Ascending aorta (tissue), 2 donors: ENCODE measurements at regions of chr11 and their contacts with region 1.

Region 1: GRCh38 chr11:8018484-8019313 is 31.6 kb downstream of the EIF3F start:
- DNase-seq: peak in 1 of 2 donors; percentile 89
- H3K4me3 ChIP-seq: peak overlapping the region; percentile 96 to 97
- H3K27ac ChIP-seq: peak overlapping the region; percentile 49 to 50
- H3K4me1 ChIP-seq: peaks cover 3 to 5% of the 10 kb centered on the region in 2 donors
- H3K27me3 ChIP-seq: no peaks in the 10 kb centered on the region
- CTCF ChIP-seq: no peak

Region 2: GRCh38 chr11:7892840-7893254 is 125.9 kb before region 1 on chr11:
- intact Hi-C with region 1: no loop called
- DNase-seq: no peak
- H3K4me3 ChIP-seq: no peak overlapping the region
- H3K27ac ChIP-seq: no peak overlapping the region
- H3K4me1 ChIP-seq: no peaks in the 10 kb centered on the region
- H3K27me3 ChIP-seq: no peaks in the 10 kb centered on the region
- CTCF ChIP-seq: peak; percentile 35 to 77 (median 75)

Region 3: DNA sequence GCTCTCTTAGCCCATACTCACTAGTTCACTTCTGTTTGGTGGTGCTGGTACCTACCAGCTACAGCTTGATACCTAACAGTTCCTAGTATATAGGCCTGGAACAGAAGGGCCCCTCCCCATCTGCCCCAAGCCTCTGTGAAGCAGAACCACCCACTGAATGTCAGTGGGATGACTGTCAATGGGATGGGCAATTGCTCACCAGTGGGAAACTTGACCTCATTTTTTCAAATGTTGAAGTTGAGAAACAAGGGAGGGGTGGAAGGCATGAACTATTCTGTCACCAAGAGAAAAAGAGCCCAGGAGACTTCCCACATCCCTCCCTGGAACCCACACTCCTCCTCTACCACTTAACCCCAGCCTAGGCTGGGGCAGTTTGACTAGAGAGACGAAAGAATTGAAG is 53.3 kb before region 1 on chr11 and contains the start of gene NLRP10:
- intact Hi-C with region 1: no loop called
- DNase-seq: no peak
- H3K4me3 ChIP-seq: no peak within 1 kb of the TSS
- H3K27ac ChIP-seq: peak within 1 kb of the TSS; percentile 15 to 63
- H3K4me1 ChIP-seq: no peaks in the 10 kb centered on the region
- H3K27me3 ChIP-seq: no peaks in the 10 kb centered on the region
- CTCF ChIP-seq: no peak
- total RNA-seq, gene NLRP10: not detected

Region 4: GRCh38 chr11:8080674-8081590 is 62.2 kb after region 1 on chr11 and contains the start of gene TUB:
- intact Hi-C with region 1: loop called (anchors 5 kb)
- DNase-seq: no peak
- H3K4me3 ChIP-seq: peak within 1 kb of the TSS; percentile 62 to 87
- H3K27ac ChIP-seq: no peak within 1 kb of the TSS
- H3K4me1 ChIP-seq: peaks cover 0 to 18% of the 10 kb centered on the region in 2 donors
- H3K27me3 ChIP-seq: no peaks in the 10 kb centered on the region
- CTCF ChIP-seq: peak in 1 of 3 experiments; percentile 14
- total RNA-seq, gene TUB: 12.9 TPM